HepG2 (cell line): ENCODE measurements at regions of chr5 and their contacts with region 1.

Region 1: GRCh38 chr5:97534166-97534565 is 351.1 kb upstream of the RIOK2 start:
- DNase-seq: peak; percentile 42
- ATAC-seq: peak; percentile 98
- H3K4me3 ChIP-seq: no peak overlapping the region
- H3K27ac ChIP-seq: no peak overlapping the region
- H3K4me1 ChIP-seq: no peaks in the 10 kb centered on the region
- H3K27me3 ChIP-seq: no peaks in the 10 kb centered on the region
- CTCF ChIP-seq: peak; percentile 69
- EP300 ChIP-seq: no peak
- POLR2A ChIP-seq: no peak
- RAD21 ChIP-seq: peak; percentile 12; the same call in 1 of the 2 replicates

Region 2: DNA sequence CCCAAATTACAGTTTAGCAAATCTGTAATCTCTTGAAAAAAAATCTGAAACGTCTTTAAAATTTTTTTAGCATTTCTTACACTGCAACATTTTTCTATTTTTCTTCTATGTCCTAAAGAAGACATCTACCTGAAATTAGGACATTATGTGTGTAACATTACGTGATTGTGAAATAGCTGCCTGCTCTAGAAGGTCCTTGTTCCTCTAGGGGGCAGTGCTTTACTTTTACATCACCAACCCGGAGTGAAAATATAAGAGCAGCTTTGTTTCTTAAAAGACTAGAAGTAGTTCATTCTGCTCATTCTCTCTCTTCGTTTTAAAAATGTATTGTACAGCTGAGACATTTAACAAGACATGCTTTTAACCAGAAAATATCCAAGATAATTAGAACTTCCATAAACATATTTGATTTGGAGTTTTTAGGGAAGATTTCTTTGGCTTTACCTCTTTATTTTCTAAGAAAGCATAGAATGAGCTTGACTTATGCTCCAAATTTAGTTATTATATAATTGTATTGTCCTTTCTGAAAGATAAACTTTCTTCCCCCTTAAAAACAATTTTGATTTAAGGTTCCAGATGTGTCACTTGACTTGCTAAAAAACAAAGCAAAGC is 303.0 kb before region 1 on chr5:
- CTCF ChIA-PET with region 1: interaction called, 13 read pairs
- POLR2A ChIA-PET with region 1: no interaction called
- in situ Hi-C with region 1: no loop called
- intact Hi-C with region 1: loop called (anchors 1 kb)
- DNase-seq: peak; percentile 70
- ATAC-seq: peak; percentile 80
- H3K4me3 ChIP-seq: no peak overlapping the region
- H3K27ac ChIP-seq: no peak overlapping the region
- H3K4me1 ChIP-seq: no peaks in the 10 kb centered on the region
- H3K27me3 ChIP-seq: no peaks in the 10 kb centered on the region
- CTCF ChIP-seq: peak; percentile 78
- EP300 ChIP-seq: no peak; a peak in 1 of 4 replicates
- POLR2A ChIP-seq: no peak
- RAD21 ChIP-seq: no peak

Region 3: GRCh38 chr5:97297063-97297703 is 237.0 kb before region 1 on chr5:
- CTCF ChIA-PET with region 1: interaction called, 11 read pairs
- POLR2A ChIA-PET with region 1: no interaction called
- in situ Hi-C with region 1: loop called (anchors 25 kb)
- intact Hi-C with region 1: loop called (anchors 1 kb)
- DNase-seq: peak; percentile 70
- ATAC-seq: peak; percentile 100
- H3K4me3 ChIP-seq: no peak overlapping the region
- H3K27ac ChIP-seq: no peak overlapping the region
- H3K4me1 ChIP-seq: no peaks in the 10 kb centered on the region
- H3K27me3 ChIP-seq: no peaks in the 10 kb centered on the region
- CTCF ChIP-seq: peak; percentile 70
- EP300 ChIP-seq: no peak
- POLR2A ChIP-seq: no peak
- RAD21 ChIP-seq: peak; percentile 75

Region 4: GRCh38 chr5:97820146-97820545 is 286.0 kb after region 1 on chr5:
- CTCF ChIA-PET with region 1: no interaction called
- POLR2A ChIA-PET with region 1: no interaction called
- in situ Hi-C with region 1: no loop called
- intact Hi-C with region 1: no loop called
- DNase-seq: no peak
- ATAC-seq: no peak
- H3K4me3 ChIP-seq: no peak overlapping the region
- H3K27ac ChIP-seq: no peak overlapping the region
- H3K4me1 ChIP-seq: no peaks in the 10 kb centered on the region
- H3K27me3 ChIP-seq: no peaks in the 10 kb centered on the region
- CTCF ChIP-seq: no peak
- EP300 ChIP-seq: no peak
- POLR2A ChIP-seq: no peak
- RAD21 ChIP-seq: no peak

Region 5: GRCh38 chr5:98827161-98827560 is 1293.0 kb after region 1 on chr5:
- CTCF ChIA-PET with region 1: interaction called, 3 read pairs
- POLR2A ChIA-PET with region 1: no interaction called
- in situ Hi-C with region 1: loop called (anchors 25 kb)
- intact Hi-C with region 1: loop called (anchors 1 kb)
- DNase-seq: peak; percentile 32
- ATAC-seq: peak; percentile 74
- H3K4me3 ChIP-seq: no peak overlapping the region
- H3K27ac ChIP-seq: no peak overlapping the region
- H3K4me1 ChIP-seq: no peaks in the 10 kb centered on the region
- H3K27me3 ChIP-seq: no peaks in the 10 kb centered on the region; a peak in 1 of 5 replicates
- CTCF ChIP-seq: peak; percentile 68
- EP300 ChIP-seq: no peak
- POLR2A ChIP-seq: no peak
- RAD21 ChIP-seq: peak; percentile 13; the same call in 1 of the 2 replicates